Motor neuron (in vitro differentiated cells): ENCODE measurements at regions of chr12 and their contacts with region 1.

Region 1: GRCh38 chr12:95117178-95117599 is 43.8 kb upstream of the NR2C1 start:
- ATAC-seq: peak; percentile 62 to 88 (median 84)
- H3K4me3 ChIP-seq: no peak overlapping the region
- H3K27ac ChIP-seq: no peak overlapping the region
- H3K4me1 ChIP-seq: no peaks in the 10 kb centered on the region

Region 2: DNA sequence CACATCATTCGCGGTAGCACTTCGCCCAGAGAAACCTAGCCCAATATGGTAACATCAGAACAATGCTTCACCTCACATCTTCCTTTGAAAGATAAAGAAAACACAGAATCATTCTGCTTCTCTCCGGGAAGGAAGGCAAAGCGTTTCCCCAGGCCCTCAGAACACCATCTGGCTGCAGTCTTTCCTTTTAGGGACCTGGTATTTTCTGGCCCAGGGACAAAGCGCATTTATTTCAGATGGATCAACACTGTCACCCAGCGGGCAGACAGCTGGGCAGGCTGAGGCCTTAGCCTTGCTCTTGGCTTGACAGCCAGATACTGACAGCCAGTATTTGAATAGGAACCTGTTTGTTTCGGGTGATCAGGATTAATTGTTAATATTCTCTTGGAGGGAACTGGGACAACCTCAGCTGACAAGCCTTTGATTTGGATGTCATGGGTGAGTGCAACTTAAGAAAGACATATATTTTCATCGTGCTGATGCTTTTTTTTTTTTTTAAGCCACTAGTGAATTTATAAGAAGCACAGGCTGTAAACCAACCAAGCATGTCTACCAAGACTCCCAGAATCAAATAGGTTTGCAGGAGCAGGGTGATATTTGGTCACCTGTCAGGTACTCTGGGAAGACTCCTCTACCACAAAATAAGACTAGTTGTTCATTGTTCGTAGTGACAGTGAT is 219.3 kb after region 1 on chr12:
- in situ Hi-C with region 1: loop called in 3 of 9 experiments (anchors 25 kb)
- ATAC-seq: peak; percentile 87 to 99 (median 99)
- H3K4me3 ChIP-seq: peak overlapping the region in 3 of 5 donors; percentile 10 to 18 (median 11)
- H3K27ac ChIP-seq: peak overlapping the region; percentile 65 to 82
- H3K4me1 ChIP-seq: peaks cover 10 to 19% of the 10 kb centered on the region in 2 donors

Region 3: DNA sequence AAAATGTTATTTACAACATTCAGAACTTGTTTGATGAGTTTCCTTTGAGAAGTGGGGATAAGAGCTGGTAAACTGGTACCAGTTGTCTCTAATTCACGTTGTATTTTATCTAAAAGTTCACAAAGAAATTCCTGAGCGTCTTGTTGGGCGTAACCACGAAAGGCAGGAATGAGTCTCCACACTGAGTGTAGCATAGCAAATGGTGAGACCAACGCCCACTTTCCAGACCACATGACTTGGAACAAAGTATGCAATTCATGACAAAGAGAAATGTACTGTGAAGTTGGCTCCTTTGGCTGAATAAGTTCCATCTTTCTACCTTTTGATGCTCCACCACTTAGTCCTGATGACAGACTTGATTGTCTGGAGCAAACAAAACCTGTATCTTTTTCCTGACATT is 415.7 kb after region 1 on chr12:
- in situ Hi-C with region 1: loop called in 4 of 9 experiments (anchors 10 to 25 kb)
- ATAC-seq: peak in 3 of 8 experiments; percentile 29 to 96 (median 94)
- H3K4me3 ChIP-seq: no peak overlapping the region
- H3K27ac ChIP-seq: no peak overlapping the region
- H3K4me1 ChIP-seq: no peaks in the 10 kb centered on the region

Region 4: DNA sequence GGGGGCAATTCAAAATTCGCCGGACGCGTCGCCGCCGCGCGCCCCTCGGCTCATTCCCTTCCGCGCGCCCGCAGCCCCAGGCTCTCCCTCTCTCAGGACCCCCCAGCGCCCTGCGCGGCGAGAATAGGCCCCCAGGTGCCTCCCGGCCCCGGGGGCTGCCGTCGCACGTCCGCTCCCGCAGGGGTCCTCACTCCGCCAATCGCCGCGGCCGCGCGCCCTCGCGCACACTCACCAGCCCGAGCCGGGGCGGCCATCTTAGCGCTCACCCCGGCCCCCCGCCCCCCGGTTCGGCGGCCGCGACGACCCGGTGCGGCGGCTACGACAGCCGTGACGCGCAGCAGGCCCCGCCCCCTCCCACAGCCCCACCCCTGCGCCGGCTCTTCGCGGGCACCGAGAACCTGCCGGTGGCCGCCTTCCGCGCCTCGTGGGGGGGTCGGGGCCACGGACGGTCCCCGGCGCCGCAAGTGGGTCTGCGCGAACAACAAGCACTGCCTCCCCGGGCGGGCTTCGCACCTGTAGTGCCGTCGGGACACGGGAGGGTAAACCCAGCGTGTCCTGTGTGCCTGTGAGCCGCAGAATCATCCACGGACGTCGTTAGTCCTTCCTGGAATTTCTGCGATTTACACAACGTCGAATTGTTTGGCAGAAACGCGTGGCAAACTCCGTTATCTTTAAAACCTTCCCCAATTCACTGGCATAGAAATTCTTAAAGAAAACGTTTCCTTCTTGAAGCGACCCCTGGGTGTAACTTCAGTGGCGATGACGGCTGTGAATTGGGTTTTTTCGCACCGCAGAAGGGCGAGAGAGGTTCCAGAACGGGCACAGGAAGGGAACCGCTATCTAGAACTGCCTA is 431.6 kb after region 1 on chr12:
- in situ Hi-C with region 1: loop called in 3 of 9 experiments (anchors 25 kb)
- ATAC-seq: peak in 7 of 8 experiments; percentile 67 to 93 (median 88)
- H3K4me3 ChIP-seq: peak overlapping the region; percentile 75 to 97 (median 86)
- H3K27ac ChIP-seq: peak overlapping the region; percentile 81 to 83
- H3K4me1 ChIP-seq: peaks cover 11 to 34% of the 10 kb centered on the region in 2 donors

Region 5: GRCh38 chr12:96383991-96384390 is 1266.8 kb after region 1 on chr12:
- in situ Hi-C with region 1: no loop called
- ATAC-seq: no peak
- H3K4me3 ChIP-seq: no peak overlapping the region
- H3K27ac ChIP-seq: no peak overlapping the region
- H3K4me1 ChIP-seq: no peaks in the 10 kb centered on the region